ENCODE measurements at regions of chr16 and their contacts with region 1.

Region 1: DNA sequence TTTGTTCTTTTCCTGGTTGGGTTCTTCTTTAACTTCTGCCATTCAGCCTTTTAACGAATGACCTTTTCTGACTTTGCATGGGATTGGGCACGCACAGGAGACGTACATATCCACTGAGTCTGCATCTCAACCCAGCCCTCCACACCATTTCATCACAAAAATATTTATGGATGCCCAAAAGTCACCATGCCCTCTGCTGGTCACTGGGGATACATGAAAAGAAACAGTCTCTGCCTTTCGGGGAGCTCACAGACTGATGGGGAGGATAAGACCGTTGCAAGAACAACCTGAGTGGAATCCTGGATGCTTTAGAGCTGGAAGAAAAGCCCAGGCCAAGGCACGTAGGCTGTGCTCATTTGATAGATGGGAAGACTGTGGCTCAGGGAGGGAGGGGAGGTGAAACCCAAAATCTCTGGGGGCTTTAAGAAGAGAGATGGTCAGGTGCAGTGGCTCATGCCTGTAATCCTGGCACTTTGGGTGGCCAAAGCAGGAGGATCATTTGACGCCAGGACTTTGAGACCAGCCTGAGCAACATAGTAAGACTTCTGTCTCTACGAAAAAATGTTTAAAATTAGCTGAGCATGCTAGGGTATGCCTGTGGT is 7.9 kb upstream of the MT2A start:
- DNase-seq: no peak
- ATAC-seq: peak; percentile 53

Region 2: DNA sequence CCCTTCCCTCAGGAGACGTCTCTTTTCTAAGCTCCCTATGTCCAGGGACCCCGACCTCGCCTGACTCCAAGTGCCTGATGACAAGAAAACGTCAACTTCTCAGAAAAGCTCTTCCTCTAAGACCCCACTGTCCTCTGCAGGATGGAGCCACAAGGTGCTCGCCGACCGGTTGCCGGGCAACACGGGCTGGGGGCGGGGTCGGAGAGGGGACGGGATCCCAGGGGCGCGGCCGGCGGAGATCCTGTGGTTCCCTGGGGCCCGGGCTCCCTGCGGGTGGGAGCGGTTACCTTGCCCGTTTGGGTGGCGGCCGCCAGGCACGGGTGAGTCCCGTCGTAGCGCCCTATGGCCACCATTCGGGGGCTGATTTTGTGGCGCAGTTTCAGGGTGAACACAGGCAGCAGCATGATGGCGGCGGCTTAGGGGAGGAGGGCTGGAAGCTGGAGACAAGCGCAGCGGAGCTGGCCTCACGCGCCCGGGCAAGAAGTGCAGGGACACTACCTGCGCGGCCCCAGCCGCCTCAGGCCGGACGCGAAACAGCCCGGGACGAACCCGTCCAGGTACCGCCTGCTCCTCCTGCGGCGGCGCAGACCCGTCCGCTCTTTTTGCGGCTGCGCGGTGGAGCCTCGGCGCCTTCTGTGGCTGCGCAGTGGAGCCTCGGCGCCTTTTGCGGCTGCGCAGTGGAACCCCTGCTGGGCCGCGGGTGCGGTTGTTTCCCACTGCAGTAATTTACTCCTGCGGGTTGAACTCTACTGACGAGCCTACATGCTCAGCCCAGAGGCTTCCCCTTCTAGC is 80.8 kb before region 1 on chr16 and contains the start of gene BBS2:
- intact Hi-C with region 1: loop called (anchors 5 kb)
- DNase-seq: peak; percentile 96
- ATAC-seq: peak; percentile 99
- total RNA-seq, gene BBS2: 39.0 TPM

Region 3: DNA sequence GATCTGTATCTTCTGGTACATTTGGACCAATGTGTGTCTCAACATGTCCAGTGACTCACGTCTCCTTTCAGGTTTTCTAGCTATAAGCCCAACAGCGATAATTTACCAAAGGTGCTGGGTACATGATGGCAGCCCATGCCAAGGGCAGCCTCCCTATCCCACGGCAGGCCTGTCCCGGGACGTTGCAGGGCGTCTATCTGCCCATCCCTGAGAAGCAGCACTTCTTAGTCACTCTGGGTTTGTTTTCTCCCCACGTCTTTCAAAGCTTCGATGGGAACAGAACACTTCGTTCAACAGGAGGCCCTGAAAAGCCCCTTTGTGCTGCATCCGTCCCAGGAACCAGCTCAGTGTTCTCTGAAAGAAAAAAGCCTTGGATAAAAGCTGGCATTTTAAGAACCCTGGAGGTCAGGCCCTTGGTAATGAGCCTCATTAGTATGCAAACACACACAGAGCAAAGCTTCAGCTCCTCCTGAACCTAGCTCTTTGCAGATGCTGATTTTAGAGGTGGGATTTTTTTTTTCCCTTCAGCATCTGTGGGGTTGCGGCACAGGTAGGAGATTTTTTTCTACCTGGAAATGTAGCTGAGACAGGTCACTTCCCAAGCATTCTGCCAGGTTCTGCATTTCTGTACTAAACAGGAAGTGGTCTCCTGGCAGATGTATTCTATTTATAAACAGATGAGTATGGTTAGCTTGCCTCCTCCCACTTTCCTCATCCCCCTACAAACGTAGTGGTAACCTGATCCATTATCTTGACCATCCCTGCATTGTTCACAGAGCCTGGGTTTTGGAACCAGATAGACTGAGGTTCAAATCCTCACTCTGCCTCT is 53.2 kb before region 1 on chr16:
- intact Hi-C with region 1: no loop called
- DNase-seq: no peak
- ATAC-seq: no peak